Posterior vena cava (tissue), 2 donors: ENCODE measurements at regions of chr13 and their contacts with region 1.

Region 1: GRCh38 chr13:113845723-113846635 is 17.9 kb downstream of the GAS6 start:
- DNase-seq: peak; percentile 62

Region 2: GRCh38 chr13:113883921-113884804 is 38.2 kb after region 1 on chr13:
- intact Hi-C with region 1: loop called in 1 of 2 experiments (anchors 1 kb)
- DNase-seq: peak; percentile 61

Region 3: DNA sequence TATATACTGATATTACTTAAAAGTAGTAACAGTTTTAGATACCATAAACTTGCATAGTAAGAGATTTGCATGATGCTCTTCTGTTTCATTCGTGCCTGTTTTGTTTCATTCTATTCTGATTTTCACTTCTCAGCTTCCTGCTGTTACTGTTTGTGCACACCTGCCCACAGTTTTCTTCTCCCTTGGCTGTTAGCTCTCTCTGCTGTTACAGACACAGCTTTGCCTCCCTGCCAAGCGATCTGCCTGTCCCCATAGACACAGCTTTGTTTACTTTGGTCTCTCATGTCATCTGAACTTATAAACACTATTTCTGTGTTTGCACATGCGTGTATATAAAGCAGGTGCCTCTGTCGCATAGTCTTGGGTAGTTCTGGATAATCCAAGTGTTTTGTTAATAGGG is 414.0 kb after region 1 on chr13:
- intact Hi-C with region 1: no loop called
- DNase-seq: no peak